CD4-positive, alpha-beta memory T cell (primary cell): ENCODE measurements at regions of chr12 and their contacts with region 1.

Region 1: GRCh38 chr12:12562585-12563261 is at the start of gene DUSP16:
- DNase-seq: peak; percentile 90 to 93 (median 91)
- H3K4me3 ChIP-seq: peak within 1 kb of the TSS; percentile 73 to 80
- H3K4me3 Mint-ChIP-seq: peak within 1 kb of the TSS; percentile 92 to 95 (median 92)
- H3K27ac ChIP-seq: peak within 1 kb of the TSS; percentile 99
- H3K27ac Mint-ChIP-seq: peak within 1 kb of the TSS; percentile 95 to 99 (median 99)
- H3K4me1 ChIP-seq: peaks cover 43% of the 10 kb centered on the region
- H3K4me1 Mint-ChIP-seq: peaks cover 25 to 51% (median 37%) of the 10 kb centered on the region in 4 donors
- H3K27me3 ChIP-seq: no peaks in the 10 kb centered on the region
- H3K27me3 Mint-ChIP-seq: no peaks in the 10 kb centered on the region
- total RNA-seq, gene DUSP16: 122 to 125 TPM

Region 2: DNA sequence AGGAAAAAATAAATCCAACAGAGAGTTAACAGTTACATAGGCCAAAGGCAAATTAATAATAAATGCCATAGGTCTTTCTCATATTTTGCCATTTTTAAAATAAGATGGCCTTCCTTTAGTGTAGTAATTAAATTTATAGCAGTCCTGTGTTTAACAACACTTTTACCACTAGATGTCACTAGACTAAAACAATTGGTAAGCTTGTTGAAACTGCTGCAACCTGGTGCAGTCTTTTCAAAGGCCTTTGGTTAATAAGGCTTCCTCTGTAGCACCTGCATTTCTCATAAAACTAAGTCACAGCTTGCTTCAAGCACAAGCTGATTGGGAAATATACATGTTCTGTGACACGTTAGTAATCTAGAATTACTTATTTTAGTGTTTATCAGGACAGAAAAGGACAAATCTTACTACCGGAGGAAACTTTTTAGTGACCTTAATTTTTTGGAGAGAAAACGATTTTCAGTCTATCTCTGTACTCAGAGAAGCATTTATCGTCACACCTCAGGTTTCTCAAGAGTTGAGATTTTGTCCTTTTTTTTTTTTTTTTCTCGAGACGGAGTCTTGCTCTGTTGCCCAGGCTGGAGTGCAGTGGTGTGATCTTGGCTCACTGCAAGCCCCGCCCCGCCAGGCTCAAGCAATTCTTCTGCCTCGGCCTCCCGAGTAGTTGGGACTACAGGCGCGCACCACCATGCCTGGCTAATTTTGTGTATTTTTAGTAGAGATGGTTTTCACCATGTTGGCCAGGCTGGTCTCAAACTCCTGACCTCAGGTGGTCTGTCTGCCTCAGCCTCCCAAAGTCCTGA is 185.9 kb before region 1 on chr12:
- CTCF ChIA-PET with region 1: interaction called, 88 read pairs
- POLR2A ChIA-PET with region 1: interaction called, 50 read pairs
- intact Hi-C with region 1: loop called (anchors 1 kb)
- DNase-seq: peak; percentile 62 to 82 (median 81)
- H3K4me3 ChIP-seq: no peak overlapping the region
- H3K4me3 Mint-ChIP-seq: peak overlapping the region in 1 of 8 donors; percentile 41
- H3K27ac ChIP-seq: peak overlapping the region; percentile 23
- H3K27ac Mint-ChIP-seq: peak overlapping the region; percentile 52 to 99 (median 91)
- H3K4me1 ChIP-seq: peaks cover 50% of the 10 kb centered on the region
- H3K4me1 Mint-ChIP-seq: peaks cover 36 to 48% (median 43%) of the 10 kb centered on the region in 4 donors
- H3K27me3 ChIP-seq: no peaks in the 10 kb centered on the region
- H3K27me3 Mint-ChIP-seq: no peaks in the 10 kb centered on the region

Region 3: GRCh38 chr12:12474931-12475795 is 87.6 kb before region 1 on chr12:
- CTCF ChIA-PET with region 1: interaction called, 16 read pairs
- POLR2A ChIA-PET with region 1: interaction called, 75 read pairs
- intact Hi-C with region 1: loop called (anchors 2 kb)
- DNase-seq: peak; percentile 76 to 82 (median 80)
- H3K4me3 ChIP-seq: peak overlapping the region; percentile 25 to 51
- H3K4me3 Mint-ChIP-seq: peak overlapping the region; percentile 67 to 89 (median 82)
- H3K27ac ChIP-seq: peak overlapping the region; percentile 81
- H3K27ac Mint-ChIP-seq: peak overlapping the region; percentile 91 to 99 (median 98)
- H3K4me1 ChIP-seq: peaks cover 64% of the 10 kb centered on the region
- H3K4me1 Mint-ChIP-seq: peaks cover 44 to 87% (median 65%) of the 10 kb centered on the region in 4 donors
- H3K27me3 ChIP-seq: no peaks in the 10 kb centered on the region
- H3K27me3 Mint-ChIP-seq: no peaks in the 10 kb centered on the region

Region 4: DNA sequence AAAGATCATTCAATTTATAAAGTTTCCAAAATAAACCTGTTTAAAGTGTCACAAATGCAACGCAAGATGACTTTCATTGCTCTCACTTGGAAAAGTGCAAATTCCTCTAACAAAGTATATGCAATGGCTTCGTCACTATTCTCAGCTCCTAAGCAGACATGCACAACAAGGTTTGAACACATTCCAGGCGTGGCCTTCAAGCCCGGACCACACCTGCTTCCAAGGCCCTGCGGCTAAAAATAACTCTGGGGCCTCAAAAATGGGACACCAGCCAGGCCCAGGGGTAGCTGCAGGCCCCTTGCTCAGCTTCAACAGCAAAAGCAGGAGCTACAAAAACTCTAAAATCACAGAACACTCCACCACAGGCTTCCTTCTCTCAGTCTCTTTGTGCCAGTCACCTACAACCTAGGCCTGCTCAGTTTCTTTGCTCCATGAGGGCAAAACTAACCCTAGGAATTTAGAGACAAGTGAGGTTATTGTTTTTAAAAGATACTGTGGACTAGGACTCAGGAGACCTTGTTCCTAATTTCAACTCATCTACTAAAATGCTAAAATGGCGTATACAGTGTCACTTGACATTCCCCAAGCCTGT is 29.4 kb before region 1 on chr12:
- CTCF ChIA-PET with region 1: interaction called, 7 read pairs
- POLR2A ChIA-PET with region 1: interaction called, 13 read pairs
- intact Hi-C with region 1: loop called (anchors 2 kb)
- DNase-seq: no peak
- H3K4me3 ChIP-seq: no peak overlapping the region
- H3K4me3 Mint-ChIP-seq: no peak overlapping the region
- H3K27ac ChIP-seq: no peak overlapping the region
- H3K27ac Mint-ChIP-seq: peak overlapping the region in 6 of 7 donors; percentile 44 to 83 (median 66)
- H3K4me1 ChIP-seq: peaks cover 42% of the 10 kb centered on the region
- H3K4me1 Mint-ChIP-seq: peaks cover 34 to 60% (median 45%) of the 10 kb centered on the region in 4 donors
- H3K27me3 ChIP-seq: no peaks in the 10 kb centered on the region
- H3K27me3 Mint-ChIP-seq: no peaks in the 10 kb centered on the region

Region 5: GRCh38 chr12:12661086-12661485 is 98.4 kb after region 1 on chr12:
- CTCF ChIA-PET with region 1: interaction called, 3 read pairs
- POLR2A ChIA-PET with region 1: interaction called, 11 read pairs
- intact Hi-C with region 1: loop called (anchors 1 kb)
- DNase-seq: no peak
- H3K4me3 ChIP-seq: no peak overlapping the region
- H3K4me3 Mint-ChIP-seq: no peak overlapping the region
- H3K27ac ChIP-seq: no peak overlapping the region
- H3K27ac Mint-ChIP-seq: no peak overlapping the region
- H3K4me1 ChIP-seq: peaks cover 2% of the 10 kb centered on the region
- H3K4me1 Mint-ChIP-seq: peaks cover 0 to 1% (median under 1%) of the 10 kb centered on the region in 4 donors
- H3K27me3 ChIP-seq: no peaks in the 10 kb centered on the region
- H3K27me3 Mint-ChIP-seq: no peaks in the 10 kb centered on the region

Region 6: DNA sequence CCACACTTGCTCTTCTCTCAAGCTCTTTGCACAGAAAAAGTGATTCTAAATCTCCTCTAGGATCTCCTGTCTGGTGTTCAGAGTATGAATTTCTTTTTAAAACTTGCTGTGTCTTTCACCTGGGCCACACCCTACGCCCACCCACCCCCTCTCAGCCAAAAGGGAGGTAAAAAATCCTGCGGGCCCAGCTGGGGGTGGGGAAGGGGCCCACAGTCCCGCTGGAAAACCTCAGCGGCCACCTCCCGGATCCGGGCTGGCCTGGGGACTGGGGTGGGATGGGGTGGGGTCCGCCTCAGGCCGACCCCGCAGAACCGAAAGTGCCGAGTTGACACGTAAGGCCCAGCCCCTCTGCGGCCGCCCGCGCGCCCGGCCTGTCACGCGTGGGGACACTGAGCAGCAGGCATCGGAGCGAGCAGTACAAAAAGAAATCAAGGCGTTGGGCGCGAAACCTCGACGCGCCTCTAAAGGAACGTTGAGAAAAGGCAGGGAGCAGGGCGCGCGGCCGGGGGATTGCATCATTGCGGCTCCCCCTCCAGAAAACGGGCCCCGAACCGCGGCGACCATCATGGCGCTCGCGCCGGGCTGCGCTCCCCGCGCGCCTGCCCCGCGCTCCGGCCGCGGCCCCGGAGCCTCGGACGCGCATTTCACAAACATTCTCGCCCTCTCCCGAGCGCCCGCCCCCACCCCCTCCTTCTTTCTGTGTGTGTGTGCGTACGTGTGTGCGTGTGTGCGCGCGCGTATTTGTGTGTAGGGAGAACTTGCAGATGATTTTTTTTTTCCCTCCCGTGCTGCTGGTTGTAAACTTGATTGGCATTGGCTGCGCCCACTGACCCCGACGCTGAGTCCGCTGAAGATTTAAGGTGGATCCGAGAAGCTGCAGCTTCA is 162.2 kb after region 1 on chr12:
- CTCF ChIA-PET with region 1: no interaction called
- POLR2A ChIA-PET with region 1: interaction called, 73 read pairs
- intact Hi-C with region 1: loop called (anchors 1 kb)
- DNase-seq: peak; percentile 93 to 97 (median 96)
- H3K4me3 ChIP-seq: peak overlapping the region in 1 of 2 donors; percentile 80
- H3K4me3 Mint-ChIP-seq: peak overlapping the region; percentile 89 to 96 (median 92)
- H3K27ac ChIP-seq: peak overlapping the region; percentile 95
- H3K27ac Mint-ChIP-seq: peak overlapping the region; percentile 95 to 99 (median 97)
- H3K4me1 ChIP-seq: peaks cover 56% of the 10 kb centered on the region
- H3K4me1 Mint-ChIP-seq: peaks cover 37 to 72% (median 43%) of the 10 kb centered on the region in 4 donors
- H3K27me3 ChIP-seq: no peaks in the 10 kb centered on the region
- H3K27me3 Mint-ChIP-seq: peaks cover 0 to 1% of the 10 kb centered on the region in 2 donors